ENCODE measurements at regions of chr1 and their contacts with region 1.

Region 1: DNA sequence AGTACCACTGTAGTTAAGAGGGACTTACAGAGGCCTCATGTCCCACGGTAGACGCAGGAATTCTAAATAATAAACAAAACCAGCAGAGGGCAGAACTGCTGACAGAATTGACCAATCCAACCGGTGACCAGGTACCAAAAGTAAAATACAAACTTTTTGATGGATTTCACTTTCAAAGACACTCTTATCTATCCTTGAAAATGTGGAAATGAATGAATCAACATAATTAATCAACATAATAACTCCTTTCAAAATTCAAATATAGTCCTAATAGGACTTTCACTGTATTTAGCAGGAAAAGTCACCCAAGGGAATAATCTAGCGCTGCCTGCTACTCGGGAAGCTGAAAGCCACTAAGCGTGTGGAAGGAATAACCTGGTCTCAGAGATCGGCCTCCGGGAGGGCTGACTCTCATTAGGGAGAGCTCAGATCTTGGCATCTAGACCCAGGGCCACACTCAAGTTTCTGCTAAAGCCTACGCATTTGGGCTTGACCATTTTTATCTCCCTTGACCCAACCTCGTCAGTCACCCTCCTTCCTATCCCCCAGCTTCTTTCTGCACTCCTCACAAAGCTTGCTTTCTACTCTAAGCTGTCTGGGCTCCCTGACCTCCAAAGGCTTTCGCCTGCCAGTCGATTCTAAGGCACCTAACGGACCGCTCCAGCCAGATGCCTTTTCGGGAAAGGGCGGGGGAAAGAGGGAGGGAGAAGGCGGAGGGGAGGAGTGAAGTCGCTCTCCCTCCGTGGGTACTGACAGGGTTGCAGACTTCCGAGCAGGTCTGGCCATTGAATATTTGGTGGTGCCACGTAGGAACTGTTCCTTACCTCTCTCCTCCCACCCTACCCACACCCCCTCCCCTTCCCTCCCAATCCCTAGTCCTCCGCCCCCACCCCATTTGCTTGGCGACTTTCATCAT is 1.6 kb downstream of the COL11A1 start:
- DNase-seq: peak; percentile 24
- ATAC-seq: peak; percentile 87
- H3K4me3 ChIP-seq: no peak overlapping the region
- H3K27ac ChIP-seq: no peak overlapping the region
- H3K4me1 ChIP-seq: peaks cover 9% of the 10 kb centered on the region; the same call in 1 of the 2 replicates
- H3K27me3 ChIP-seq: peaks cover 0 to 13% of the 10 kb centered on the region in 2 experiments; a peak in 1 of 5 replicates
- CTCF ChIP-seq: peak; percentile 48
- EP300 ChIP-seq: no peak
- POLR2A ChIP-seq: no peak
- RAD21 ChIP-seq: no peak

Region 2: DNA sequence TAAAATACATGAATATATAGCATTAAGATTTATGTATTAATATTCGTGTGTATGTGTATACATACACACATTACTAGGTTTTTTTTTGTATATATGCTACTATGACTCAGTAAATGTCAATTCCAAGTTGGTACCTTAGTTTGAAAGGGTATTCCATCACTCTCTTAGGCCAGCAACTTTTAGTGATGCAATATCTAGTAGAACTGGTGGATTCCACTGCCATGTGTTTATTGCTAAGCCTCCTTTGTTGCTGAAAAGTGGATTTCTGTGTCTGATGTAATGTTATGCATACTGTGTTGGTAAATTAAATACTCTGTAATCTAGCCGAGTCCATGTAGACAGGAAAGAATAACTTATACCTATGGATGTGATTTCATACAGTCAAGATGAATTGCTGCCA is 18.5 kb after region 1 on chr1:
- CTCF ChIA-PET with region 1: no interaction called
- POLR2A ChIA-PET with region 1: no interaction called
- in situ Hi-C with region 1: no loop called
- intact Hi-C with region 1: no loop called
- DNase-seq: no peak
- ATAC-seq: no peak
- H3K4me3 ChIP-seq: no peak overlapping the region
- H3K27ac ChIP-seq: no peak overlapping the region
- H3K4me1 ChIP-seq: no peaks in the 10 kb centered on the region
- H3K27me3 ChIP-seq: no peaks in the 10 kb centered on the region
- CTCF ChIP-seq: no peak
- EP300 ChIP-seq: no peak
- POLR2A ChIP-seq: no peak
- RAD21 ChIP-seq: no peak

Region 3: DNA sequence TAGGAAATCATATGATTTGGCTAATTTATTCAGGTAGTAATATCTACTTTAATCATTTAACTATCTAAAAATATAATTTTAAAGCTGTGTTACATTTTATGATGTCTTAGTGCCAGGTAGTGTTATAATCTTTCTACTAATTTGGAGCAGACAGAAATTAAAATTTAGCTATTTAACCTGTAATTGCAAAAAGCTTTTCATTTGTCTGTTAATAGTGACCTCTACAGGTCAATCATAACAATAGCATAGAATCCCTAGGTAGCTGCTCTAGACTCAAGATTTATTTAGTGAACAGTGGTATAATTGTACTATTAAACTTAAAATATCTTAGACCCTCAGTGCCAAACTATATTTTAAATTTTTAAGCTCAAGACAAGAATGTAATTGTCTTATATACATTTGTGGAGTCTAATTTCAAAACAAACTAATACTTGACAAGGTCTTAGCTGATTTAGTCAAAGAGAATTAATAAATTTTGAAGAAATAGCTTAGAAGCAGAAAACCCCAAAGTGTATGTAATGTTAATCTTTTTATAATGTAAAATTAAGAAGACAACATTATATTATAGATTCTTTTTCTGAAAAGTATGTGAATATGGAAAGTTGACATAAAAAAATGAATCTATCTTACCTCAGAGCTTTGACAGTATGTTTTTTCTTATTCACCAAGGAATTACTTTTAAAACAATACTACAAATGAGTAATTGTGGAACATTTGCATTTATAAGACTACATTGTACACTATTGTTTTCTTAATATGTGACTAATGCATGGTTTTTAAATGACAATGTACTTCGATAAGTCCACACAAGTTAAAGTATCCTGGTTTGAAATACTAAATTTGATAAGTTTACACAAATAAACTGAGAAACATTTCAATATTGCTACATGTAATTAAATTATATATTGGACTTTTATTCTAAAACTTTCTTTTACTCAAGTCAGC is 354.7 kb after region 1 on chr1:
- CTCF ChIA-PET with region 1: interaction called, 10 read pairs
- POLR2A ChIA-PET with region 1: no interaction called
- in situ Hi-C with region 1: loop called (anchors 10 kb)
- intact Hi-C with region 1: loop called (anchors 1 kb)
- DNase-seq: no peak
- ATAC-seq: no peak
- H3K4me3 ChIP-seq: no peak overlapping the region
- H3K27ac ChIP-seq: no peak overlapping the region
- H3K4me1 ChIP-seq: no peaks in the 10 kb centered on the region
- H3K27me3 ChIP-seq: no peaks in the 10 kb centered on the region
- CTCF ChIP-seq: peak; percentile 44
- EP300 ChIP-seq: no peak
- POLR2A ChIP-seq: no peak
- RAD21 ChIP-seq: no peak

Region 4: DNA sequence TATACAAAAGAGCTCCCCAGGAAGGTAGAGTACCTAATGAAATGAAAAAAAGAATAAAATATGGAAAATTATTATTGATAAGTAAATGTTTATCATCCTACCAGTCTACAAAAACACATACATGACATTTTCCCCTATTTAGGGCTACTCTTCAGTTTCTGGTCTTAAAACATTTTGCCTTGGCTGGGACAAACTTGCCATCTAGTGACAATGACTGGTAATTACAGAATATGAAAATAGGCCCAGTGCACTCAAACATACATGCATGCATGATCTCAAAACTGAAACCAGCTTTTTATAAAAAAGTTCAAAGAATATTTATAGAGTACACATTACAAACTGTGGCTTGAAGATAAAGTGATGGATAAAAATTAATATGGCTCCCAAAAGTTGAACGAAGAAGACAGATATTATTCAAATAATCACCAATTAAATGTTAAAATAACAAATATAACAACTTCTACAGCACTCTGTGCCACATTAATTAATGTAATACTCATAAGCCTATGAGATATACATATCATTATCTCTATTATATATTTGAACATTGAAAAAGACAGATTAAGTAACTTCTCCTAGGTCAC is 408.3 kb after region 1 on chr1:
- CTCF ChIA-PET with region 1: interaction called, 8 read pairs
- POLR2A ChIA-PET with region 1: no interaction called
- in situ Hi-C with region 1: no loop called
- intact Hi-C with region 1: loop called (anchors 1 kb)
- DNase-seq: peak; percentile 28
- ATAC-seq: peak; percentile 38; the same call in 1 of the 3 replicates
- H3K4me3 ChIP-seq: no peak overlapping the region
- H3K27ac ChIP-seq: no peak overlapping the region
- H3K4me1 ChIP-seq: no peaks in the 10 kb centered on the region
- H3K27me3 ChIP-seq: no peaks in the 10 kb centered on the region
- CTCF ChIP-seq: peak; percentile 62
- EP300 ChIP-seq: no peak
- POLR2A ChIP-seq: no peak
- RAD21 ChIP-seq: 0 out of 2 replicates have a peak, but pooled peaks have one; percentile 27

Measured in HepG2 (cell line).